CD4-positive, alpha-beta T cell (primary cell): ENCODE measurements at regions of chr9 and their contacts with region 1.

Region 1: GRCh38 chr9:89428901-89429890 is 68.7 kb downstream of the SEMA4D start:
- DNase-seq: peak; percentile 44 to 85 (median 60)
- ATAC-seq: peak; percentile 81
- H3K4me3 ChIP-seq: no peak overlapping the region
- H3K4me3 Mint-ChIP-seq: peak overlapping the region; percentile 63
- H3K27ac ChIP-seq: peak overlapping the region in 1 of 2 donors; percentile 67
- H3K27ac Mint-ChIP-seq: peak overlapping the region; percentile 96
- H3K4me1 ChIP-seq: peaks cover 100% of the 10 kb centered on the region
- H3K4me1 Mint-ChIP-seq: peaks cover 95% of the 10 kb centered on the region
- H3K27me3 ChIP-seq: no peaks in the 10 kb centered on the region
- H3K27me3 Mint-ChIP-seq: no peaks in the 10 kb centered on the region
- CTCF ChIP-seq: peak; percentile 58

Region 2: GRCh38 chr9:89318123-89319014 is 110.8 kb before region 1 on chr9 and contains the start of gene SECISBP2:
- CTCF ChIA-PET with region 1: interaction called, 3 read pairs
- POLR2A ChIA-PET with region 1: no interaction called
- intact Hi-C with region 1: loop called in 1 of 2 experiments (anchors 5 kb)
- DNase-seq: peak; percentile 85 to 97 (median 90)
- ATAC-seq: peak; percentile 87
- H3K4me3 ChIP-seq: peak within 1 kb of the TSS; percentile 69
- H3K4me3 Mint-ChIP-seq: peak within 1 kb of the TSS; percentile 88
- H3K27ac ChIP-seq: peak within 1 kb of the TSS; percentile 97 to 99
- H3K27ac Mint-ChIP-seq: peak within 1 kb of the TSS; percentile 94
- H3K4me1 ChIP-seq: peaks cover 22% of the 10 kb centered on the region
- H3K4me1 Mint-ChIP-seq: peaks cover 77% of the 10 kb centered on the region
- H3K27me3 ChIP-seq: no peaks in the 10 kb centered on the region
- H3K27me3 Mint-ChIP-seq: no peaks in the 10 kb centered on the region
- CTCF ChIP-seq: no peak
- total RNA-seq, gene SECISBP2: 109 to 112 TPM

Region 3: DNA sequence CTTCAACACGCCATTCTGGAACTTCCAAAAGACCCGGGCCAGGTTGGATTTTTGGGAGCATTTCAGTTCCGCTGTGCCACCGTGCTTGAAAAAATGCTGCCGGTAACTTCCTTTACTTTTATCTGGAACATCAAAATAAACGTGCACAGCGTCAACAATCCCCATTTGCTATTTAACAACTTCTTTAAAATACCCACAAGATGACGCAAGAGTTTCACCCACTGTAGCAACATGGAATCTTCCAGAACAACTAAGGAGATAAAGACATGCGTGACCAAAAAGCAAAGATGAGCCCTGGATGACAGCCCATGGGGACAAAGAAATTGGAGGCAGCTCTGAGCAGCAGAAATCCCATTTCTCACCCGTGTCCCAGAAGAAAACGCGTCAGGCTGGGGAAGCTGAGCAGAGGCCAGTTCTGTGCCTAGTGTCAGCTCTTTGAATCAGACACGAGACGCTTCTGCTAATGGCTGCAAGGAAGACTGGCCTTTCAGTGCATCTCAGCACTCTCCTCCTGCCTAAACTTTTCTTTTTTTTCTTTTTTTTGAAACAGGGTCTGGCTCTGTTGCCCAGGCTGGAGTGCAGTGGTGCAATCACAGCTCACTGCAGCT is 49.6 kb before region 1 on chr9:
- CTCF ChIA-PET with region 1: no interaction called
- POLR2A ChIA-PET with region 1: no interaction called
- intact Hi-C with region 1: no loop called
- DNase-seq: peak in 4 of 14 experiments; percentile 15 to 69 (median 44)
- ATAC-seq: peak; percentile 77
- H3K4me3 ChIP-seq: no peak overlapping the region
- H3K4me3 Mint-ChIP-seq: peak overlapping the region; percentile 0
- H3K27ac ChIP-seq: peak overlapping the region; percentile 8 to 32
- H3K27ac Mint-ChIP-seq: peak overlapping the region; percentile 83
- H3K4me1 ChIP-seq: peaks cover 62% of the 10 kb centered on the region
- H3K4me1 Mint-ChIP-seq: peaks cover 42% of the 10 kb centered on the region
- H3K27me3 ChIP-seq: no peaks in the 10 kb centered on the region
- H3K27me3 Mint-ChIP-seq: no peaks in the 10 kb centered on the region
- CTCF ChIP-seq: no peak

Region 4: DNA sequence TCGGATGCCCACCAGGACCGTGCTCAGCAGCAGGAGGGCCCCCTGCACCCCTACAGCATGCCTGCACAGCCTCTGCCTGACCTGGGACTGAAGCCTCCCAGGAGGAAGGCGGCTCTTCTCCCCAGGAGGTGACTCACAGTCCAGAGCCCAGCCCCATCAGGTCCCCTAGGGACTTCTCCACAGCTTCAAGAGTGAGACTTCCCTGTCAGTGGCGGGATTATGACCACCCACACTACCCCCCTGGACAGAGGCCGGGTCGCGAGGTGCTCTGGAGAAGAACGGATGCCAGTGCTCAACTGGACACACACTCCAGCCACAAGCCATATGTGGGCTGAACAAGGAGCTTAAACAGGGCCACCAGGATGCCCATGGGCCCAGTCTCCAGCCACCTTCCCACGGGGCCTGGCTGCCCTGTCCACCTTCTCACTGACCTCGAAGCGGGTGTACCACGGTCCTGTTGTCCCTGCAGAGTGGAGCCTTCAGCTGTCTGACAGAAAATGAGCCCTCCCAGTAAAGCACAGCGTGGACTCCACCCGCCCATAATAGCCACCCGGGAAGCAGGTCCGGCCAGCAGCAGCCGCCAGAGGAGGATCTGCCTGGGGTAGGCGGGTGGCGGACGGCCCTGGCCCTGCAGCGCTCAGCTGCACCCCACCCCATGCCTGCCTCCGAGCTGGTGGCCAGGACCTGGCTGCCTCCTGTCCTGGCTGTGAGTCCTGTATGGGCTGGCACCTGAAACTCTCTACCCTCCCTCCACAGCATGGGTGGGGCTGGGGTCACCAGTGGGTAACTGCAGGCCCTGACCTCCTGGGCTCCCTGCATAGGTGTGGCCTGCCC is 14.0 kb after region 1 on chr9:
- CTCF ChIA-PET with region 1: interaction called, 19 read pairs
- POLR2A ChIA-PET with region 1: interaction called, 9 read pairs
- intact Hi-C with region 1: no loop called
- DNase-seq: peak in 2 of 14 experiments; percentile 49 to 60
- ATAC-seq: no peak
- H3K4me3 ChIP-seq: no peak overlapping the region
- H3K4me3 Mint-ChIP-seq: no peak overlapping the region
- H3K27ac ChIP-seq: peak overlapping the region; percentile 66 to 71
- H3K27ac Mint-ChIP-seq: peak overlapping the region; percentile 96
- H3K4me1 ChIP-seq: peaks cover 99% of the 10 kb centered on the region
- H3K4me1 Mint-ChIP-seq: peaks cover 86% of the 10 kb centered on the region
- H3K27me3 ChIP-seq: no peaks in the 10 kb centered on the region
- H3K27me3 Mint-ChIP-seq: no peaks in the 10 kb centered on the region
- CTCF ChIP-seq: no peak

Region 5: DNA sequence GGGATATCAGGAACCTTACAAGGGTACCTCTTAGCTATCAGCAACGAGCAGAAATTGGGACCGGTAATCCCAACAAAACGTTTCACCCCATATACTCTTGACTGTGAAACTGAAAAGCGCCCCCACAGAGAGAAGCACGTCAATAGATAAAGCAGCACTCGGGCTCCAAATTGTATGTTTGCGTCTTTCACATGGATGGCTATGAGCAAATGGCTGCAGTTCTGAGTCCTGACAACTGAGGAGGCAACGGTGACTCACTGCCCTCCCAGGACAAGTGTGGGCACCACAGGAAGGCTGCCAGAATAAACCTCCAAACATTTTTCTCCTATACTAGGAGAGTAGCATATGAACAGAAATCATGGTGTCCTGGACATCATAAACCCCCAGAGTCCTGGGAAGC is 32.1 kb after region 1 on chr9:
- CTCF ChIA-PET with region 1: interaction called, 29 read pairs
- POLR2A ChIA-PET with region 1: interaction called, 4 read pairs
- intact Hi-C with region 1: loop called in 1 of 2 experiments (anchors 5 kb)
- DNase-seq: peak in 4 of 14 experiments; percentile 28 to 63 (median 56)
- ATAC-seq: peak; percentile 14
- H3K4me3 ChIP-seq: no peak overlapping the region
- H3K4me3 Mint-ChIP-seq: peak overlapping the region; percentile 71
- H3K27ac ChIP-seq: peak overlapping the region; percentile 50 to 62
- H3K27ac Mint-ChIP-seq: peak overlapping the region; percentile 96
- H3K4me1 ChIP-seq: peaks cover 97% of the 10 kb centered on the region
- H3K4me1 Mint-ChIP-seq: peaks cover 97% of the 10 kb centered on the region
- H3K27me3 ChIP-seq: no peaks in the 10 kb centered on the region
- H3K27me3 Mint-ChIP-seq: no peaks in the 10 kb centered on the region
- CTCF ChIP-seq: no peak

Region 6: DNA sequence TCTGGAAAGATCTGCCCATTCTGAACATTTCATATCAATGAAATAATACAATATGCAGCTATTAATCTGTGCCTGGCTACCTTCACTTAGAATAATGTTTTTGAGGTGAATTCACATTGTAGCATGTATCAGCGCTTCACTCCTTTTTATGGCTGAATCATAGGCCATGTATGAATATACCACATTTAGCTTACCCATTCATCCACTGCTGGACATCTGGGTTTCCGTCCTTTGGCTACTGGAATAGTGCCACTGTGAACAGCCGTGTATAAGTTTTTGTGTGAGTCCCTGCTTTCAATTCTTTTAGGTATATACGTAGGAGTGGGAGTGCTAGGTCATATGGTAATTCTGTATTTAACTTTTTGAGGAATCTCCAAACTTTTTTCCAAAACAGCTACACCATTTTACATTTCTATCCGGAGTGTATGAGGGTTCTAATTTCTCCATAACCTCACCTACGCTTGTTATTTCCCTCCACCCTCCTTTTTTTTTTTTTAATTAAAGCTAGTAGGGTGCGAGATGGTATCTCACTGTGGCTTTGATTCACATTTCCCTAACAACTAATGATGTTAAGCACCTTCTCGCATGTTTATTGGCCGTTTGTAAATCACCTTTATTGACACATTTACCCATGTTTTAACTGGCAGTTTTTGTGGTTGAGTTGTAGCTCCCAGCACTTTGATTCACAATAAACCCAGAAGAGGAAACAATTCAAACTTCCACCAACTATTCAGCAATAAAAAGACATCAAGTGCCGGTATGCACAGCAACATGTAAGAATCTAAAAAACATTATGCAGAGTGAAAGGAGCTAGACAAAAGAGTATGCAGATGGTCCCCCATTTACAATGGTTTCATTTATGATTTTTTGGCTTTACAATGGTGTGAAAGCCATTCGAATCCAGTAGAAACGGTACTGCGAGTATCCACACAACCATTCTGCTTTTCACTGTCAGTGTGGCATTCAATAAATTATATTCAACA is 60.6 kb after region 1 on chr9:
- CTCF ChIA-PET with region 1: interaction called, 13 read pairs
- POLR2A ChIA-PET with region 1: no interaction called
- intact Hi-C with region 1: no loop called
- DNase-seq: peak in 4 of 14 experiments; percentile 33 to 92 (median 89)
- ATAC-seq: peak; percentile 84
- H3K4me3 ChIP-seq: peak overlapping the region; percentile 0
- H3K4me3 Mint-ChIP-seq: peak overlapping the region; percentile 76
- H3K27ac ChIP-seq: peak overlapping the region; percentile 65 to 67
- H3K27ac Mint-ChIP-seq: peak overlapping the region; percentile 88
- H3K4me1 ChIP-seq: peaks cover 76% of the 10 kb centered on the region
- H3K4me1 Mint-ChIP-seq: peaks cover 92% of the 10 kb centered on the region
- H3K27me3 ChIP-seq: no peaks in the 10 kb centered on the region
- H3K27me3 Mint-ChIP-seq: no peaks in the 10 kb centered on the region
- CTCF ChIP-seq: no peak

Region 7: GRCh38 chr9:89522261-89522958 is 93.2 kb after region 1 on chr9:
- CTCF ChIA-PET with region 1: interaction called, 15 read pairs
- POLR2A ChIA-PET with region 1: interaction called, 6 read pairs
- intact Hi-C with region 1: no loop called
- DNase-seq: peak; percentile 54 to 94 (median 68)
- ATAC-seq: peak; percentile 85
- H3K4me3 ChIP-seq: peak overlapping the region; percentile 29
- H3K4me3 Mint-ChIP-seq: peak overlapping the region; percentile 69
- H3K27ac ChIP-seq: peak overlapping the region; percentile 81 to 94
- H3K27ac Mint-ChIP-seq: peak overlapping the region; percentile 94
- H3K4me1 ChIP-seq: peaks cover 96% of the 10 kb centered on the region
- H3K4me1 Mint-ChIP-seq: peaks cover 93% of the 10 kb centered on the region
- H3K27me3 ChIP-seq: no peaks in the 10 kb centered on the region
- H3K27me3 Mint-ChIP-seq: no peaks in the 10 kb centered on the region
- CTCF ChIP-seq: no peak